Endothelial cell of umbilical vein (primary cell): ENCODE measurements at regions of chr3 and their contacts with region 1.

Region 1: DNA sequence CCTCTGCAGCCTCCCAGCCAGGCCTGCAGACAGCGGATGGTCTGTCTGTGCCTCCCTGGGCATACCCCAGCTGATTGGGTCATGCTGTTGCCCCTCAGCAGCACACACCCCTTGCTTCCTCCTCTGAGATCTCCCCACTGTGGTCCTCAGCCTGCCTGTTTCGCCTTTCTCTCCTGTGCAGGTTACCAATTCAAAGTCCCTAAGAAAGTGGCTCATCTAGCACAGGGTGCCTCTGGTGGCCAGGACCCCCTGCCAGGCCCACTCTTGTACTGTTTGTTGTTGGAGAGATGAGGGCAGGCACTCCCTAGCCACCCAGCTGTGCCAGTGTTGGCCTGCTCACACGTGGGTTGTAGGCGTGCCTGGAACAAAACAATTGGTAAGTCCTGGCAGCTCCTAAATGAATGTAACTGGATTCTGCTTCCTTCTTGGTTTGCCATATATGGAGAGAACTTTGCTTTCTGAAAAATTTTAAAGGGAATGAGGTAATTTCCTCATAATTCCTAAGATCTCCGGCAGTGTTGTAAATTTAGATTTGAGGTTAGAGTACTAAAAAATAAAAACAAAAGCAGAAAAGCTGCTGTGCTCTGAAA is 213.2 kb upstream of the IL12A start:
- DNase-seq: peak; percentile 91
- H3K4me3 ChIP-seq: no peak overlapping the region
- H3K27ac ChIP-seq: peak overlapping the region; percentile 83
- H3K4me1 ChIP-seq: peaks cover 34% of the 10 kb centered on the region
- H3K27me3 ChIP-seq: no peaks in the 10 kb centered on the region
- CTCF ChIP-seq: no peak
- POLR2A ChIP-seq: no peak

Region 2: GRCh38 chr3:159787191-159787590 is 11.7 kb after region 1 on chr3:
- CTCF ChIA-PET with region 1: interaction called, 35 read pairs
- POLR2A ChIA-PET with region 1: interaction called, 7 read pairs
- dilution Hi-C with region 1: no loop called
- intact Hi-C with region 1: loop called (anchors 1 kb)
- DNase-seq: peak; percentile 88
- H3K4me3 ChIP-seq: no peak overlapping the region
- H3K27ac ChIP-seq: peak overlapping the region; percentile 87
- H3K4me1 ChIP-seq: peaks cover 45% of the 10 kb centered on the region
- H3K27me3 ChIP-seq: no peaks in the 10 kb centered on the region
- CTCF ChIP-seq: no peak
- POLR2A ChIP-seq: no peak

Region 3: GRCh38 chr3:159796744-159797143 is 21.3 kb after region 1 on chr3:
- CTCF ChIA-PET with region 1: interaction called, 21 read pairs
- POLR2A ChIA-PET with region 1: no interaction called
- dilution Hi-C with region 1: no loop called
- intact Hi-C with region 1: loop called (anchors 1 kb)
- DNase-seq: peak; percentile 86
- H3K4me3 ChIP-seq: no peak overlapping the region
- H3K27ac ChIP-seq: peak overlapping the region; percentile 79
- H3K4me1 ChIP-seq: peaks cover 40% of the 10 kb centered on the region
- H3K27me3 ChIP-seq: no peaks in the 10 kb centered on the region
- CTCF ChIP-seq: no peak
- POLR2A ChIP-seq: no peak

Region 4: GRCh38 chr3:159852821-159853505 is 77.5 kb after region 1 on chr3:
- CTCF ChIA-PET with region 1: interaction called, 5 read pairs
- POLR2A ChIA-PET with region 1: interaction called, 6 read pairs
- dilution Hi-C with region 1: no loop called
- intact Hi-C with region 1: loop called (anchors 2 kb)
- DNase-seq: peak; percentile 97
- H3K4me3 ChIP-seq: peak overlapping the region in 2 of 3 experiments; percentile 45 to 52
- H3K27ac ChIP-seq: peak overlapping the region; percentile 97
- H3K4me1 ChIP-seq: peaks cover 70% of the 10 kb centered on the region
- H3K27me3 ChIP-seq: no peaks in the 10 kb centered on the region
- CTCF ChIP-seq: no peak
- POLR2A ChIP-seq: peak; percentile 2

Region 5: DNA sequence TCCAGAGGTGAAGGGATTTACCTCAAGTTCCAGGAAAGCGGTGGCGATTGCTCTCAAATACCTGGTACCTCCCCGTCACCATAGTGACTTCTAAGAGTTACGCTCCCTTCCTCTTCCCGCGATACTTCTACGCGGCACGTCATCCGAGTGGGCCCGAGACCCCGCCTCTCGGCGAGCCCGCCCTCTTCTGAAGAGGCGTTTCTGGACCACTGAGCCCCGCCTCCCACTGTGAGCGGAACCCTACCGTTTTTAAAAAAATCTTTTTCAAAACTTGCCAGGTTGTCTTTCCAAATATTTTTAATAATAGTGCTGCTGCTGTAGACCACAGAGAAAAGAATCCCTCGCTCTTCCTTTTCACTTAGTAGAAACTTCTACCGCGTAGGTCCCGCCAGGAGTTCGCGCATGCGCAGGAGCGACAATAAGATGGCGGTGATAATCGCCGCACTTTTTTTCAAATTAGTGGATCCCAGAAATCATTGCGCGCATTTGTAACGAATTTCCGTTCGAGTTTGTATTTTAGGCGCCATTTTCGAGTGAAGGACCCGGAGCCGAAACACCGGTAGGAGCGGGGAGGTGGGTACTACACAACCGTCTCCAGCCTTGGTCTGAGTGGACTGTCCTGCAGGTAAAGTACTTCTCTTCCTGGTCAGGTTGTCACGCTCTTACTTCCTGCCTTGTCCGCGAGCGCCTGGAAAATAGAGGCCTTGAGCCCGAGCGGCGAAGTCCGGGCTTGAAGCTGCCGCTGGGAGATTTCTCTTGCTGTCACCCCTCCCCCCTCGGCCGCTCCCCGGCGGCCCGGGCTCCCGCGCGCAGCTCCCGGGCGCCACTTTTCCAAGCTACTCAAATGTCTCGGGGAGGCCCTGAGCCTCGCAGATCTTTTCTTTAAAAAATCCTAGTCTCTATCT is 623.9 kb after region 1 on chr3 and contains the starts of genes IFT80 and SMC4:
- CTCF ChIA-PET with region 1: interaction called, 3 read pairs
- POLR2A ChIA-PET with region 1: no interaction called
- dilution Hi-C with region 1: no loop called
- intact Hi-C with region 1: loop called (anchors 5 kb)
- DNase-seq: peak; percentile 97
- H3K4me3 ChIP-seq: peak within 1 kb of the TSS; percentile 77 to 79 (median 78)
- H3K27ac ChIP-seq: peak within 1 kb of the TSS; percentile 76
- H3K4me1 ChIP-seq: peaks cover 16% of the 10 kb centered on the region
- H3K27me3 ChIP-seq: no peaks in the 10 kb centered on the region
- CTCF ChIP-seq: no peak
- POLR2A ChIP-seq: peak; percentile 52
- total RNA-seq, gene IFT80: 21.4 and 22.5 TPM in 2 replicates
- total RNA-seq, gene SMC4: 126 and 153 TPM in 2 replicates